Calu3 (cell line): ENCODE measurements at regions of chr14 and their contacts with region 1.

Region 1: GRCh38 chr14:77707724-77708408 is at the starts of genes ALKBH1 and SLIRP:
- DNase-seq: peak; percentile 85
- H3K4me3 Mint-ChIP-seq: peak within 1 kb of the TSS; percentile 91
- H3K27ac Mint-ChIP-seq: peak within 1 kb of the TSS; percentile 85
- H3K4me1 Mint-ChIP-seq: peaks cover 19% of the 10 kb centered on the region
- H3K27me3 Mint-ChIP-seq: no peaks in the 10 kb centered on the region
- CTCF ChIP-seq: no peak
- total RNA-seq, gene ALKBH1: 12.8 and 16.7 TPM in 2 replicates
- total RNA-seq, gene SLIRP: 137 and 166 TPM in 2 replicates

Region 2: DNA sequence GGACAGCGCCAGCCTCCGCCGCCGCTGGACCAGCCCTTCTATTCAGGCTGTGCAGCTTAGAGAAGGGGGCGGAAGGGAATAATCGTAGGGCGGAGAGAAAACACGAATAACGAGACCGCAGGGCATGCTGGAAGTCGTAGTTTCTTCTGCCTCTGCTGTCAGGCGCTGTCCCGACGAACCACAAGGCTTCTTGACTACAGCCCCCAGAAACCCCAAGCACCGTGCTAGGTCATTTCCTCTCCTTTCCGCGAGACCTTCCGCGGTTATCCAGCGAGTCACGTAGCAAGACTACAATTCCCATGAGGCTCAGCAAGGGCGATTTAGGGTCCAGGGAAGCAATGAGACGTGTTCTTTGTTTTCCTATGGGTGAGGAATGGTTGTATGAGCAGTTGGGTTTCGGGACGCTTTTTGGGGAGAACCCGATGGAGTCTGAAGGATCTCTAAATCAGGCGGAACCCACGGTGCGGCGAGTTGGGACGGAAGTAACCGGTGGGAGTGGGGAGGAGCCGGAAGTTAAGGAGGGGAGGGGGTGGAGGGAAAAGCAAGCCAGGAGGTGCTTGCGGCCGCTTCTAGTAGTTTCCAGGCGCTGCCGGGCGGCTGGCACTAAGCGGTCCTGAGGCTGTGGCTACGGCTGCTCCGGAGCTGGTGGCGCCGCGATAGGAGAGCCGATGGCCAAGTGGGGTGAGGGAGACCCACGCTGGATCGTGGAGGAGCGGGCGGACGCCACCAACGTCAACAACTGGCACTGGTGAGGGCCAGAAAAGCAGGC is 250.2 kb before region 1 on chr14 and contains the starts of genes AHSA1 and VIPAS39:
- CTCF ChIA-PET with region 1: no interaction called
- intact Hi-C with region 1: loop called (anchors 2 kb)
- DNase-seq: peak; percentile 92
- H3K4me3 Mint-ChIP-seq: peak within 1 kb of the TSS; percentile 91
- H3K27ac Mint-ChIP-seq: peak within 1 kb of the TSS; percentile 95
- H3K4me1 Mint-ChIP-seq: peaks cover 12% of the 10 kb centered on the region
- H3K27me3 Mint-ChIP-seq: no peaks in the 10 kb centered on the region
- CTCF ChIP-seq: no peak
- total RNA-seq, gene AHSA1: 287 and 313 TPM in 2 replicates
- total RNA-seq, gene VIPAS39: 19.3 and 19.4 TPM in 2 replicates

Region 3: GRCh38 chr14:77593501-77593961 is 114.3 kb before region 1 on chr14:
- CTCF ChIA-PET with region 1: no interaction called
- intact Hi-C with region 1: loop called (anchors 5 kb)
- DNase-seq: no peak
- H3K4me3 Mint-ChIP-seq: peak overlapping the region; percentile 26
- H3K27ac Mint-ChIP-seq: peak overlapping the region; percentile 79
- H3K4me1 Mint-ChIP-seq: peaks cover 42% of the 10 kb centered on the region
- H3K27me3 Mint-ChIP-seq: no peaks in the 10 kb centered on the region
- CTCF ChIP-seq: no peak

Region 4: GRCh38 chr14:77660754-77661153 is 47.1 kb before region 1 on chr14:
- CTCF ChIA-PET with region 1: no interaction called
- intact Hi-C with region 1: loop called (anchors 5 kb)
- DNase-seq: no peak
- H3K4me3 Mint-ChIP-seq: no peak overlapping the region
- H3K27ac Mint-ChIP-seq: no peak overlapping the region
- H3K4me1 Mint-ChIP-seq: no peaks in the 10 kb centered on the region
- H3K27me3 Mint-ChIP-seq: no peaks in the 10 kb centered on the region
- CTCF ChIP-seq: no peak